ENCODE measurements at regions of chr1 and their contacts with region 1.

Region 1: GRCh38 chr1:107750358-107750959 is 214.5 kb downstream of the VAV3 start:
- DNase-seq: peak in 6 of 10 donors; percentile 30 to 86 (median 54)

Region 2: GRCh38 chr1:107277022-107277421 is 473.4 kb before region 1 on chr1:
- intact Hi-C with region 1: loop called (anchors 10 kb)
- DNase-seq: peak in 6 of 10 donors; percentile 17 to 58 (median 32)

Region 3: GRCh38 chr1:107430540-107431228 is 319.8 kb before region 1 on chr1:
- intact Hi-C with region 1: loop called (anchors 2 kb)
- DNase-seq: peak in 2 of 10 donors; percentile 12 to 24

Measured in posterior cingulate gyrus (tissue), 11 donors.